Head of caudate nucleus (tissue), 42 donors: ENCODE measurements at regions of chr11 and their contacts with region 1.

Region 1: DNA sequence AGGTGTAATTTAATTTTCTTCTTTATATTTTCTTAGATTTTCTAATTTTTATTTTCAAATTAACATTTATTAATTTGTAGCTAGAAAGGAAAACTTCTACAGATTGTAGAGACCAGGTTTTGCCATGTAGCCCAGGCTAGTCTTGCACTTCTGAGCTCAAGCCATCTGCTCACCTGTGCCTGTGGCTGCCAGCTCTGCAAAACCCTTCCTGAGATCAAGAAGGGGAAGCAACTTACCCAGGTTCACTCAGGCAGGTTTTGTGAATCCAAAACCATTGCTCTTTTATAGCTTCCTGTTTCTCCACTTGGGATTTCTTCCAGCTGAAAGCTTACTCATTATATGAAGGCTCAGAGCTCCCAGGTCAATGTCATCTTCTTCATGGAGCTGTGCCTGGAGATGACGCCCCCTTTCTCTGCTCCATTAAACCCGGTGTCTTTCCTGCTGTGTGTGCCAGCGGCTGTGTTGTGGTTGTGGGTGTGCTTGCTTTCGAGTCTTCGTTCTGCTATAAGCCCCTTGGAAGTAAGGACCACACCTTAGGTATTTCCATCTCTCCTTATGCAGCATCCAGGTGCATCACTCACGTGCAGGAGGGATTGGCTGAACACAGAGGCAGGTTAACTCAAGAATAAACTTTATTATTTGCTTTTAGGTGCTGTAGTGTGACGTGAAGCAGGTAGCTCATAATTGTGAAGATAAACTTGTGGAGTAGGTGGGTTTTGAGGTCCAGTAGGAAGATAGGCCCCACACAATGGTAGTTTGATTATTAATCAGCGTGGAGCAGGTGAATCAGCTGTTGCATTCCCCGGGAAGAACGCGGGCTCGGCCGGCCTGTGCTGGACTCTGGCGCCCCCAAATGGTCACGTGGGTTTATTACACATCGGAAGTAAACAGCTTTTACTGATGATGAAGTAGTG is 42.2 kb upstream of the INCENP start:
- DNase-seq: peak; percentile 80 to 97 (median 91)

Region 2: GRCh38 chr11:61899146-61899841 is 182.3 kb before region 1 on chr11:
- intact Hi-C with region 1: loop called (anchors 2 kb)
- DNase-seq: peak; percentile 48 to 94 (median 85)

Region 3: GRCh38 chr11:61947486-61948210 is 134.0 kb before region 1 on chr11:
- intact Hi-C with region 1: loop called (anchors 10 kb)
- DNase-seq: peak; percentile 79 to 96 (median 91)